IMR-90 (cell line): ENCODE measurements at regions of chr7 and their contacts with region 1.

Region 1: DNA sequence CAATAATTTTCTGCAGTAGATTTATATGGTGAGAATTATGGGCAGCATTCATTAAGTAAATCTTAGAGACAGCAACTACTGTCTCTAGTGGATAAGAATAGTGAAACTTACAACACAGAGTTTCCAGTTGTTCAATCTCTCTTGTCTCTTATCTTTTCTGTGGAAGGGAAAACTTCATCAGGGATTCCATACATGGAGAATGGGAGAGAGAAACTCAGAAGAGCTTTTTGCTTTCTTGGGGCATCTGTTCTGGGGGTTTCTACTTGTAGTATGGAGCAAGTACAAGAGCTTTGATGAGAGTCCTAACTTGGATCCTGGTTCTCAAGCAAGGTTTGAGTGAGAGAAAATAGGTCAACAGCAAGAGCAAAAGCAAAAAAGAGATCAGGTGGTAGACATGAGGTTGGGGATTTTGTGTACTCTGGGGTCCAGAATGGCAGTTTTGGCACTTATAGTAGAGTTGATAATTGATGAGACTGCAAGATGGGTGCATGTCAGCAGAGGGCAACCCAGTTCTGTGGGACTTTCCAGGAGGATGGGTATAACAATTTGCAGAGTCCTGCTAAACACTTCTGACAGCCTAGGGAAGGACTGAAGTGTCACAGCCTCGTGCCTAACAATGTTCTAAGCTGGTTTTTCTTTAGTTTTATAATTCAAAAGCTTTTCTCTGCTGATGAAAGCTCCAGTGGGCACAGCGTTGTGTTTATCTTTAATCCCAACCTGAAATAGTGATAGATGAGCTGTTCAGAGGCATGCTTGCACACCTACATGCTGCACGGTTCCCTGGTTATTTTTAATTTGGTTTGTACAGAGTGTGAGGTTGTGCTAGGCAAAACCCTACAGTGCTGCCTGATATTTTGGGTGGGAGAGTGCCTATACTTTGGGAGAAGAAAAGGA is 32.0 kb upstream of the STRIP2 start:
- DNase-seq: no peak
- ATAC-seq: no peak
- H3K4me3 ChIP-seq: no peak overlapping the region
- H3K27ac ChIP-seq: no peak overlapping the region
- H3K4me1 ChIP-seq: peaks cover 5% of the 10 kb centered on the region
- H3K27me3 ChIP-seq: no peaks in the 10 kb centered on the region
- CTCF ChIP-seq: no peak
- POLR2A ChIP-seq: no peak
- RAD21 ChIP-seq: no peak

Region 2: GRCh38 chr7:129271500-129272355 is 130.5 kb before region 1 on chr7:
- CTCF ChIA-PET with region 1: no interaction called
- POLR2A ChIA-PET with region 1: no interaction called
- dilution Hi-C with region 1: no loop called
- in situ Hi-C with region 1: no loop called
- intact Hi-C with region 1: no loop called
- DNase-seq: peak; percentile 43
- ATAC-seq: 0 out of 2 replicates have a peak, but pooled peaks have one; percentile 24
- H3K4me3 ChIP-seq: no peak overlapping the region
- H3K27ac ChIP-seq: no peak overlapping the region
- H3K4me1 ChIP-seq: no peaks in the 10 kb centered on the region
- H3K27me3 ChIP-seq: no peaks in the 10 kb centered on the region
- CTCF ChIP-seq: peak; percentile 46
- POLR2A ChIP-seq: no peak
- RAD21 ChIP-seq: peak; percentile 47

Region 3: GRCh38 chr7:129454249-129454551 is 52.0 kb after region 1 on chr7:
- CTCF ChIA-PET with region 1: no interaction called
- POLR2A ChIA-PET with region 1: no interaction called
- dilution Hi-C with region 1: no loop called
- in situ Hi-C with region 1: no loop called
- intact Hi-C with region 1: no loop called
- DNase-seq: no peak
- ATAC-seq: no peak
- H3K4me3 ChIP-seq: no peak overlapping the region
- H3K27ac ChIP-seq: no peak overlapping the region
- H3K4me1 ChIP-seq: no peaks in the 10 kb centered on the region; the same call in 1 of the 2 replicates
- H3K27me3 ChIP-seq: no peaks in the 10 kb centered on the region
- CTCF ChIP-seq: no peak
- POLR2A ChIP-seq: no peak
- RAD21 ChIP-seq: no peak

Region 4: DNA sequence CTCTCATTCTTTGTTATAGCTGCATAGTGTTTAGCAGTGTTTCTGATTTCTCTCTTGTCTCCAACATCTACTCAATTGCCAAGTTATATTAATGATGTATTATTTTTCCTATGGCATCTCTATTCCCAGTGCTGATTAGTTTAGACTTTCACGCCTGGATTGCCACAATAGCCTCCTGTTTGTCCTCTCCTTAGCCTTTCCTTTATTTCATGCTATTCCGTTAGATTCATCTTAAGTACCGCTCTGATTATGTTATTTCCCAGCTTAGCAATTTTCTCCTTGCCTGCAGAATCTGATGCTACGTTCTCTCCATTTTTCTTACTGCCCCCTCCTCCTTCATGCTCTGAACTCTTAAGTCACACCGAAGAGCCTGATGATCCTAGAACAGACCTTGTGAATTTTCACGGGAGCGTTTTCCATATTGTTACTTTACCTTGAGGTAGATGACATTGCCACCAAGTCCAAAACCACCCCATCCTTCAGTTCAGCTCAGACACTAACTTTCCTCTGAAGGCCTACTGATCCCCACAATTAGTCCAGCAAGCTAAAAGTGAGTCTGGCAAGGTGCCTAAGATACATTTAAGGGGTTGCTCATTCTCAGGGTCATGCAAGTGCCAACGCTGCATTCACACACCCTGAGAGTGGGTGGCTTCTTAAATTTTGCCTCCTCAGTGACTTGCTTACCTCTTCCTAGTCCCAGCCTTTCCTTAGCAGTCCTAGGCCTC is 202.7 kb after region 1 on chr7:
- CTCF ChIA-PET with region 1: no interaction called
- POLR2A ChIA-PET with region 1: interaction called, 12 read pairs
- dilution Hi-C with region 1: no loop called
- in situ Hi-C with region 1: no loop called
- intact Hi-C with region 1: no loop called
- DNase-seq: no peak
- ATAC-seq: no peak
- H3K4me3 ChIP-seq: no peak overlapping the region
- H3K27ac ChIP-seq: no peak overlapping the region
- H3K4me1 ChIP-seq: no peaks in the 10 kb centered on the region
- H3K27me3 ChIP-seq: no peaks in the 10 kb centered on the region
- CTCF ChIP-seq: no peak
- POLR2A ChIP-seq: no peak
- RAD21 ChIP-seq: no peak